CD4-positive, alpha-beta T cell (primary cell): ENCODE measurements at regions of chr7 and their contacts with region 1.

Region 1: DNA sequence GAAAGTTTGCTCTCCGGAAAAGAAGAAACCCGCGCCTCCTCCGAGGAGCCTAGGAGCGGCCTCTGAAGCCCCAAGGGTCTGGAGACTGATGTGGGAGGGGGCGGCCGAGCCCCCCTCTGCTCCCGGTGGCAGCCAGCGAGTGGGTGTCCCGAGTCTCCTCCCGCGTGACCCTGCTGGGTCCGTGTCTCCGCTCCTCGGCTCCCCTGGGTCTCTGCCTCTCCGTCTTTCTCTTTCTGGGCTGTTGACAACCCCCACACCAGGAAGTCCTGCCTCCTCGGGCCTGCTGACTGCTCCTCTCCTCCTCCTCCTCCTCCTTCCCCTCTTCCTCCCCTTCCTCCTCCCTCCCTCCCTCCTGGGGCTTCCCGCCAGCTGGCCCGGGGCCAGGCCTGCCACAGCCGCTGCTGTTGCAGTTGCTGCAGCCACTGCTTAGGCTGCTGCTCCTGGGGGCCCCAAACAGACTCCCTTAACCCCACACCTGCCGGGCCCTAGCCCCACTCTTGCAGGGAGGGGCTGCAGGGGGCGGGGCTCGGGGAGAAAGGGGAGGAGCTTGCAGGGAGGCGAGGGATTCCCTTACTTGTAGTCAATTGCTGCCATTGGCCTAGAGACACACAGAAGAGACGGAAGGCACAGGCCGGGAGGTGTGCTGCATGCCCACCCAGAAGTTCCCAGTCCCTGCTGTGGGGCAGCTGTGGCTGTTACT is at the start of gene TSC22D4:
- DNase-seq: peak; percentile 85 to 97 (median 93)
- ATAC-seq: peak; percentile 75
- H3K4me3 ChIP-seq: peak within 1 kb of the TSS; percentile 100
- H3K4me3 Mint-ChIP-seq: peak within 1 kb of the TSS; percentile 97
- H3K27ac ChIP-seq: peak within 1 kb of the TSS; percentile 73 to 84
- H3K27ac Mint-ChIP-seq: peak within 1 kb of the TSS; percentile 83
- H3K4me1 ChIP-seq: peaks cover 70% of the 10 kb centered on the region
- H3K4me1 Mint-ChIP-seq: peaks cover 49% of the 10 kb centered on the region
- H3K27me3 ChIP-seq: no peaks in the 10 kb centered on the region
- H3K27me3 Mint-ChIP-seq: no peaks in the 10 kb centered on the region
- CTCF ChIP-seq: no peak
- total RNA-seq, gene TSC22D4: 34.6 to 36.5 TPM

Region 2: DNA sequence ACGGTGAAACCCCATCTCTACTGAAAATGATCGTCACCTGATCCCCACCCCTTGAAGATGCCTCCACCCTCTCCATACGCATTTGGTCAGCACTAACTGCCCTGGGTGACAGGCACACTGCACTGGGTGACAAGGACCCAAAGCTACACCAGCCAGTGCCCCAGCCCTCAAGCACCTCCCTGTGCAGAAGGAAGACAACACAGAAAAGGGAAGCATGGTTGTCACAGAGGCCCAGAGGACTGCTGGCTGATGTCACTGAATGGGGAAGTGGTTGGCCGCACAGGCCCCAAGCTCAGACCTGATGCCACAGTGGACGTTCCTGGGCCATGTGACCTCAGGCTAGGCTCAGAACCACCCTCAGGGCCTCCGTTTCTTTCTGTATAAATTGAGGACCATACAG is 110.0 kb before region 1 on chr7:
- CTCF ChIA-PET with region 1: no interaction called
- POLR2A ChIA-PET with region 1: no interaction called
- intact Hi-C with region 1: no loop called
- DNase-seq: peak in 4 of 14 experiments; percentile 13 to 80 (median 60)
- ATAC-seq: peak; percentile 25
- H3K4me3 ChIP-seq: no peak overlapping the region
- H3K4me3 Mint-ChIP-seq: no peak overlapping the region
- H3K27ac ChIP-seq: peak overlapping the region in 1 of 2 donors; percentile 48
- H3K27ac Mint-ChIP-seq: peak overlapping the region; percentile 30
- H3K4me1 ChIP-seq: peaks cover 32% of the 10 kb centered on the region
- H3K4me1 Mint-ChIP-seq: peaks cover 20% of the 10 kb centered on the region
- H3K27me3 ChIP-seq: no peaks in the 10 kb centered on the region
- H3K27me3 Mint-ChIP-seq: no peaks in the 10 kb centered on the region
- CTCF ChIP-seq: no peak

Region 3: GRCh38 chr7:100435401-100436304 is 43.5 kb before region 1 on chr7:
- CTCF ChIA-PET with region 1: no interaction called
- POLR2A ChIA-PET with region 1: interaction called, 32 read pairs
- intact Hi-C with region 1: loop called (anchors 1 to 2 kb)
- DNase-seq: peak; percentile 29 to 77 (median 48)
- ATAC-seq: peak; percentile 48
- H3K4me3 ChIP-seq: peak overlapping the region; percentile 67
- H3K4me3 Mint-ChIP-seq: peak overlapping the region; percentile 95
- H3K27ac ChIP-seq: peak overlapping the region; percentile 87 to 90
- H3K27ac Mint-ChIP-seq: peak overlapping the region; percentile 100
- H3K4me1 ChIP-seq: peaks cover 57% of the 10 kb centered on the region
- H3K4me1 Mint-ChIP-seq: peaks cover 48% of the 10 kb centered on the region
- H3K27me3 ChIP-seq: no peaks in the 10 kb centered on the region
- H3K27me3 Mint-ChIP-seq: no peaks in the 10 kb centered on the region
- CTCF ChIP-seq: no peak

Region 4: GRCh38 chr7:100538654-100539435 is 59.7 kb after region 1 on chr7 and contains the start of gene AGFG2:
- CTCF ChIA-PET with region 1: interaction called, 3 read pairs
- POLR2A ChIA-PET with region 1: interaction called, 9 read pairs
- intact Hi-C with region 1: loop called in 1 of 2 experiments (anchors 5 kb)
- DNase-seq: peak; percentile 100
- ATAC-seq: peak; percentile 94
- H3K4me3 ChIP-seq: peak within 1 kb of the TSS; percentile 73
- H3K4me3 Mint-ChIP-seq: peak within 1 kb of the TSS; percentile 99
- H3K27ac ChIP-seq: peak within 1 kb of the TSS in 1 of 2 donors; percentile 41
- H3K27ac Mint-ChIP-seq: peak within 1 kb of the TSS; percentile 77
- H3K4me1 ChIP-seq: peaks cover 44% of the 10 kb centered on the region
- H3K4me1 Mint-ChIP-seq: peaks cover 48% of the 10 kb centered on the region
- H3K27me3 ChIP-seq: no peaks in the 10 kb centered on the region
- H3K27me3 Mint-ChIP-seq: no peaks in the 10 kb centered on the region
- CTCF ChIP-seq: no peak
- total RNA-seq, gene AGFG2: 6.6 to 9.9 TPM

Region 5: GRCh38 chr7:100852048-100852872 is 373.1 kb after region 1 on chr7 and contains the start of gene SLC12A9:
- CTCF ChIA-PET with region 1: no interaction called
- POLR2A ChIA-PET with region 1: no interaction called
- intact Hi-C with region 1: loop called (anchors 2 to 10 kb)
- DNase-seq: peak; percentile 68 to 92 (median 82)
- ATAC-seq: peak; percentile 91
- H3K4me3 ChIP-seq: peak within 1 kb of the TSS; percentile 72
- H3K4me3 Mint-ChIP-seq: peak within 1 kb of the TSS; percentile 95
- H3K27ac ChIP-seq: peak within 1 kb of the TSS; percentile 36 to 62
- H3K27ac Mint-ChIP-seq: peak within 1 kb of the TSS; percentile 91
- H3K4me1 ChIP-seq: peaks cover 30% of the 10 kb centered on the region
- H3K4me1 Mint-ChIP-seq: peaks cover 23% of the 10 kb centered on the region
- H3K27me3 ChIP-seq: no peaks in the 10 kb centered on the region
- H3K27me3 Mint-ChIP-seq: no peaks in the 10 kb centered on the region
- CTCF ChIP-seq: peak; percentile 96
- total RNA-seq, gene SLC12A9: 26.3 to 28.2 TPM

Region 6: DNA sequence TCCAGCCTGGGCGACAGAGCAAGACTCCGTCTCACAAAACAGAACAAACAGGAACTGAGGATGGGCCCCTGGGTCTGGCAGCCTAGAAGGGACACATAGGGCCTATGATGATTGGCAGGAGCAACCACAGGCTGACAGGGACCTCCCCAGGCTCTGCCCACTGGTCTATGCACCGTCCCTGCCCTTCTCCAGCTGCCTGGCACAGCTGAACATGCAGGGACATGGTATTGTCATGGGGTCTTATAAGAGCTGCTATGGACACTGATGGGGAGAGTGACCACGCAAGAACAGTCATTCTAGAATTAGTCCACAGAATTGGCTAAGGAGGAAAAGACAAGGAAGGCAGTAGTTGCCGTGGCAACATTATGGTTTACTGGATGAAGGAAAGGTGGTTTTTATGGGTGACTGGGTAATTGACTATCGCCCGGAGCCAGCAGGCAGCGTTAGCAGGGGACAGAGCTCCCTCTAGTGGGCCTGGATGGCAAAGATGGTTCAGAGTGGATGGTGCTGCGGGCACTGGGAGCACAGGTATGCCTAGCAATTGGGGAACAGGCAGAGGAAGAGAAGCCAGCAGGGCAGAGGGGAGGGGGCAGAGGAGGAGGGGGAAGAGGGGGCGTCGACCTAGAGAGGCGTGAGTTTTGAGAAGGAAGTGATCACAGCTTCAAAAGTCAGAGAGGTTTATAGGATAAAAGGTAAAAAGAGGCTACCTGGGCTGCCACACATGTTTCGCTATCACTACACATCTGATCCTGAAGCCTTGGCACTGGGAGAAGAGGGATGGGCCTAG is 598.4 kb after region 1 on chr7:
- CTCF ChIA-PET with region 1: no interaction called
- POLR2A ChIA-PET with region 1: no interaction called
- intact Hi-C with region 1: no loop called
- DNase-seq: peak; percentile 70 to 89 (median 80)
- ATAC-seq: peak; percentile 99
- H3K4me3 ChIP-seq: no peak overlapping the region
- H3K4me3 Mint-ChIP-seq: no peak overlapping the region
- H3K27ac ChIP-seq: no peak overlapping the region
- H3K27ac Mint-ChIP-seq: no peak overlapping the region
- H3K4me1 ChIP-seq: peaks cover 5% of the 10 kb centered on the region
- H3K4me1 Mint-ChIP-seq: peaks cover 7% of the 10 kb centered on the region
- H3K27me3 ChIP-seq: no peaks in the 10 kb centered on the region
- H3K27me3 Mint-ChIP-seq: peaks cover 11% of the 10 kb centered on the region
- CTCF ChIP-seq: peak; percentile 87